ENCODE measurements at regions of chr5 and their contacts with region 1.

Region 1: GRCh38 chr5:112707187-112708102 is 30.2 kb upstream of the APC start:
- DNase-seq: peak; percentile 98
- H3K4me3 Mint-ChIP-seq: peak overlapping the region; percentile 91
- H3K27ac Mint-ChIP-seq: peak overlapping the region; percentile 89
- H3K4me1 Mint-ChIP-seq: peaks cover 48% of the 10 kb centered on the region
- H3K27me3 Mint-ChIP-seq: no peaks in the 10 kb centered on the region

Region 2: DNA sequence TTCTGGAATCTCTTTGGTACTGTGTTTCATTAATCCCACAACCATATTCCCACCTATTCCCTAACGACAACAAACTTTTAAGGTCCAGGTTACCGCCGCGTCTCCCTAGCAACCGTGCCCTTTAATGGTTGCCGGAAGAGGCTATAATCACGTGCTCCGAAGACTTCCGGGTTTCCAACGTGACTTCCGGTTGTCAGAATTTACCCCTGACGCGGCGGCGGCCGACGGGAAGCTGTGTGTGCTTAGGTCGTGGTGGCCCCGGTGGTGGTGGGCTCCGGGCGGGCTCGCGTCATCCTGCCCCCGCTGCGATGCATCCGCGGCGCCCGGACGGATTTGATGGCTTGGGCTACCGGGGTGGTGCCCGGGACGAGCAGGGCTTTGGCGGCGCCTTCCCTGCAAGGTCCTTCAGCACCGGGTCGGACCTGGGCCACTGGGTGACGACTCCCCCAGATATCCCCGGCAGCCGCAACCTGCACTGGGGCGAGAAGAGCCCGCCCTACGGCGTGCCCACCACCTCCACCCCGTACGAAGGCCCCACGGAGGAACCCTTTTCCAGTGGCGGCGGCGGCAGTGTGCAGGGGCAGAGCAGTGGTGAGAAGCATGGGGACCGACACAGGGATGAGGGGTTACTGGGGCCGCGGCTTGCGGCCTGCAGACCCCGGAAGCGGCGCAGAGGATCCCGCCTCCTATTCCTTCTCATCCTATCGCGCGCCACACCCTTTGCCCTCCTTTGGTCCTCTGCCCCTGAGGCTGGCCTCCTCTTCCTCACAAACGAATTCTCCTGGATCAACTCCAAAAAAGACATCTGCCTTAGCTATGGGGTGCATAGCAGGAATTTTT is 1968.4 kb before region 1 on chr5 and contains the start of gene SLC25A46:
- CTCF ChIA-PET with region 1: no interaction called
- intact Hi-C with region 1: loop called (anchors 5 kb)
- DNase-seq: peak; percentile 89
- H3K4me3 Mint-ChIP-seq: peak within 1 kb of the TSS; percentile 96
- H3K27ac Mint-ChIP-seq: peak within 1 kb of the TSS; percentile 86
- H3K4me1 Mint-ChIP-seq: peaks cover 25% of the 10 kb centered on the region
- H3K27me3 Mint-ChIP-seq: peaks cover 8% of the 10 kb centered on the region
- total RNA-seq, gene SLC25A46: 26.1 to 27.2 TPM

Region 3: DNA sequence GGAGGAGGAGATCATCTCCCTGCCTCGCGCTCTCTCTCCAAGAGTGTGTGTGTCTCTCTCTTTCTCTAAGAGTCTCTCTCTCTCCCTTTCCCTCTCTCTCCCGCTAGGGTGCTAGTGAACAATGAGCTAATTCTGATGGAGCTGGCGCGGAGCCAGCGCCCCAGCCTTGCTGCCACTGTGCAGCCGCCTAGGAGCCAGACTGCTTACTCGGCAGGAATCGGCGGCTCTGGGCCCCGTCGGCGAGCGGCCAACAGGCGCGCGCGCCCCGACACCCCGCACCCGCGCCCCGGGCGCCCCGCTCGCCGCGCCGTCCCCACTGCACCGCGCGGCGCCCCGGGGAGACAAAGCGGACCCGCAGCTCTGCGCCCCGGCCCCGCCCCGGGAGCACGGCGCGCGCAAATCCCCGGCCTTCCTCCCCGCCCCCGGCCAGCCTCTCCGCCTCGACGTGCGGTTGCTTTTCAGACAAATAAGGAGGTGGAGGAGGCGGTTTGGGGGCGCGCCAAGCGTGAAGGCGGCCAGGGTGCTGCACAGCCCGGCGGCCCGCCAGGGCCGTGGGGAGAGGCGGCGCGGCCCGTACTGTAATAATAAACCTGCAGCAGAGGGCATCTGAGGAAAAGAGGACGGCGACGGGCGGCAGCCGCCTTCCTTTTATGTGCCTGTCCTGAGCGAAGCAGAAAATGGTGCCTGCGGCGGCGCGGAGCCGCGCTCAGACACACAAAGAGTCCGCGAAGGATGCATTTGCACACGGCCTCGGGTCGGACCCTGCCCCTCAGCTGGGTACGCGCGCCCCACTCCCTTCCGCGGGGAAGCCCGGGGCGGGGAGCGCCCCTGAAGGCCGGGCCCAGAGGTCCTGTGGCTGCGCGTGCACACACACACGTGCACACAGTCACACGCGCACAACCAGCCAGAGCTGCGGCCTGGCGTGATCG is 949.8 kb before region 1 on chr5:
- CTCF ChIA-PET with region 1: no interaction called
- intact Hi-C with region 1: loop called (anchors 10 kb)
- DNase-seq: peak; percentile 83
- H3K4me3 Mint-ChIP-seq: peak overlapping the region; percentile 85
- H3K27ac Mint-ChIP-seq: peak overlapping the region; percentile 77
- H3K4me1 Mint-ChIP-seq: peaks cover 16% of the 10 kb centered on the region
- H3K27me3 Mint-ChIP-seq: no peaks in the 10 kb centered on the region

Region 4: GRCh38 chr5:112737463-112738190 is 30.2 kb after region 1 on chr5 and contains the start of gene APC:
- CTCF ChIA-PET with region 1: interaction called, 11 read pairs
- intact Hi-C with region 1: loop called (anchors 1 kb)
- DNase-seq: peak; percentile 92
- H3K4me3 Mint-ChIP-seq: peak within 1 kb of the TSS; percentile 95
- H3K27ac Mint-ChIP-seq: no peak within 1 kb of the TSS
- H3K4me1 Mint-ChIP-seq: peaks cover 18% of the 10 kb centered on the region
- H3K27me3 Mint-ChIP-seq: no peaks in the 10 kb centered on the region
- total RNA-seq, gene APC: 15.6 to 17.2 TPM

Region 5: GRCh38 chr5:112860929-112861637 is 153.6 kb after region 1 on chr5 and contains the start of gene SRP19:
- CTCF ChIA-PET with region 1: no interaction called
- intact Hi-C with region 1: loop called (anchors 1 kb)
- DNase-seq: peak; percentile 96
- H3K4me3 Mint-ChIP-seq: peak within 1 kb of the TSS; percentile 96
- H3K27ac Mint-ChIP-seq: peak within 1 kb of the TSS; percentile 95
- H3K4me1 Mint-ChIP-seq: peaks cover 30% of the 10 kb centered on the region
- H3K27me3 Mint-ChIP-seq: peaks cover 9% of the 10 kb centered on the region
- total RNA-seq, gene SRP19: 43.7 to 49.6 TPM

Region 6: GRCh38 chr5:112921833-112922817 is 214.7 kb after region 1 on chr5 and contains the start of gene REEP5:
- CTCF ChIA-PET with region 1: no interaction called
- intact Hi-C with region 1: loop called (anchors 1 kb)
- DNase-seq: peak; percentile 76
- H3K4me3 Mint-ChIP-seq: peak within 1 kb of the TSS; percentile 90
- H3K27ac Mint-ChIP-seq: peak within 1 kb of the TSS; percentile 81
- H3K4me1 Mint-ChIP-seq: peaks cover 45% of the 10 kb centered on the region
- H3K27me3 Mint-ChIP-seq: no peaks in the 10 kb centered on the region
- total RNA-seq, gene REEP5: 18.3 to 18.8 TPM

Region 7: DNA sequence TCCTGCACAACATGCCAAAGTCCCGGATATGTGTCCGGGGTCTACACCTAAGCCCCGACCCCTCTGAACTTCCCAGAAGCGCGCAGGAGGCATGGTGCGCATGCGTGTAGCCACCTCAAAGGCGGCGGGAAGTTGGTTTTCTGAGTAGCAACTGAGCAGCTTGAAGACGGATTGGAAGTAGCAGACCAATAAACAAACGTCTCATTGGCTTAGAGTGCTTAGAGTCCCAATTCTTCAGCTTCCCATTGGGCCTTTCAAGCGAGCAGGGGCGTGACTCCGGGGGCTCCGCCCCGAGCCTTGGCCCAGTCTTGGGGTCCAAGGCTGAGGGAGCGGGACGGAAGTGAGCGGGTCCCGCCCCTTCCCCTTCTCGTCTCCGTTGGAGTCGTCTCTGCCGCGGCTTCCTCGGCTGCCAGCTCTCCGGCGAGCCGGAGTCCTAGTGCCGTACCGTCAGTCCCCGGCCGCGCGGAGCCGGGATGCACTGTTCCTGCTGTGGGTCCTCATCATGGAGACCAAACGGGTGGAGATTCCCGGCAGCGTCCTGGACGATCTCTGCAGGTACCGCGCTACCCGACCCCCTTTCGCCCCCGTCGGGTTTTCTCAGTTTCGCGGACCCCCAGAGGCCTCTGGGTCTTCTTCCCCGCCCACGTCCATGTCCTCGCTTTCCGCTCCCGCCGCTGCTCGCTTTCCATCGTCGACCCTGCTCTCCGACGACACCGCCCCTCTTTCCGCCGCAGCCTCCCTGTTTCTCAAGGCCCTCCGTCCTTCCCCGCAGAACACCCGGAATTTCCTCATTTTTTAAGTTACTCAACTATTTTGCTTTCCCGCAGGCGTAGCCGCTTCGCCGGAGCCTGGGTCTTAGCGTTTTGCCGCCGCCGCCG is 269.2 kb after region 1 on chr5 and contains the start of gene DCP2:
- CTCF ChIA-PET with region 1: no interaction called
- intact Hi-C with region 1: loop called (anchors 1 kb)
- DNase-seq: peak; percentile 96
- H3K4me3 Mint-ChIP-seq: peak within 1 kb of the TSS; percentile 96
- H3K27ac Mint-ChIP-seq: peak within 1 kb of the TSS; percentile 95
- H3K4me1 Mint-ChIP-seq: peaks cover 38% of the 10 kb centered on the region
- H3K27me3 Mint-ChIP-seq: no peaks in the 10 kb centered on the region
- total RNA-seq, gene DCP2: 129 TPM

Region 8: DNA sequence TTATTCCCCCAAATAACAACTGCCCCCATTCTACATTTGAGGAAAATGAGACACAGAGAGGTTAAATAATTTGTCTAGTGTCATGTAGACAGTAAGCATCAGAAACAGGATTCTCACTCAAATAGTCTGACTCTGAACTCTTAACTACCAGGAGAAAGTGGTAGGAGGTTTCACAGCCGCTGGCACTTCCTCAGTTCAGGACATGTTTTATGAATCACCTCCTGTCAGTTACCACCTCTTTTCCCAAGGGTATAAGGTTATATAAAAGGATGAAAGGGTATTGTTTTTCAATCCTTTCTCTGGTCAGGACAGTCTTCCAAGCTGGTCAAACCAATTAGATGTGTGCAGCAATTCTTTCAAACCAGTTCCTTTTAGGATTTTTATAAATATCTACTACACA is 675.3 kb after region 1 on chr5:
- CTCF ChIA-PET with region 1: no interaction called
- intact Hi-C with region 1: no loop called
- DNase-seq: no peak
- H3K4me3 Mint-ChIP-seq: no peak overlapping the region
- H3K27ac Mint-ChIP-seq: no peak overlapping the region
- H3K4me1 Mint-ChIP-seq: peaks cover 13% of the 10 kb centered on the region
- H3K27me3 Mint-ChIP-seq: peaks cover 23% of the 10 kb centered on the region

Measured in activated naive CD4-positive, alpha-beta T cell treated with anti-CD3 and anti-CD28 coated beads for 36 hours (primary cell).